MCF 10A (cell line): ENCODE measurements at regions of chr10 and their contacts with region 1.

Region 1: GRCh38 chr10:91843083-91843482 is 44.9 kb downstream of the TNKS2 start:
- DNase-seq: no peak
- H3K4me3 Mint-ChIP-seq: no peak overlapping the region
- H3K27ac Mint-ChIP-seq: no peak overlapping the region
- H3K4me1 Mint-ChIP-seq: no peaks in the 10 kb centered on the region
- H3K27me3 Mint-ChIP-seq: no peaks in the 10 kb centered on the region
- CTCF ChIP-seq: no peak

Region 2: DNA sequence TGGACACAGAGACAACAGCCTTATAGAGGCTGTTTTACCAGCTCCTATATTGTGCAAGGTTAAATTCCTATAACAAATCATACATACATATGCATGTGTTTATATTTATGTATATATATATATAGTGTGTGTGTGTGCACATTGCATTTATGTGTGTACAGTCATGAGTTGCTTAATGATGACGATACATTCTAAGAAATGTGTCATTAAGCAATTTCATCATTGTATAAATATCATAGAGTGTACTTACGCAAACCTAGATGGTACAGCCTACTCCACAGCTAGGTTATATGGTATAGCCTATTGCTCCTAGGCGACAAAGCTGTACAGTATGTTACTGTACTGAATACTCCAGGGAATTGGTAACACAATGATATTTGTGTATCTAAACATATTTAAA is 75.0 kb before region 1 on chr10:
- CTCF ChIA-PET with region 1: no interaction called
- POLR2A ChIA-PET with region 1: no interaction called
- intact Hi-C with region 1: loop called (anchors 10 kb)
- DNase-seq: peak; percentile 53
- H3K4me3 Mint-ChIP-seq: no peak overlapping the region
- H3K27ac Mint-ChIP-seq: no peak overlapping the region
- H3K4me1 Mint-ChIP-seq: no peaks in the 10 kb centered on the region
- H3K27me3 Mint-ChIP-seq: peaks cover 17% of the 10 kb centered on the region
- CTCF ChIP-seq: no peak